AG04450 (cell line): ENCODE measurements at regions of chr1 and their contacts with region 1.

Region 1: DNA sequence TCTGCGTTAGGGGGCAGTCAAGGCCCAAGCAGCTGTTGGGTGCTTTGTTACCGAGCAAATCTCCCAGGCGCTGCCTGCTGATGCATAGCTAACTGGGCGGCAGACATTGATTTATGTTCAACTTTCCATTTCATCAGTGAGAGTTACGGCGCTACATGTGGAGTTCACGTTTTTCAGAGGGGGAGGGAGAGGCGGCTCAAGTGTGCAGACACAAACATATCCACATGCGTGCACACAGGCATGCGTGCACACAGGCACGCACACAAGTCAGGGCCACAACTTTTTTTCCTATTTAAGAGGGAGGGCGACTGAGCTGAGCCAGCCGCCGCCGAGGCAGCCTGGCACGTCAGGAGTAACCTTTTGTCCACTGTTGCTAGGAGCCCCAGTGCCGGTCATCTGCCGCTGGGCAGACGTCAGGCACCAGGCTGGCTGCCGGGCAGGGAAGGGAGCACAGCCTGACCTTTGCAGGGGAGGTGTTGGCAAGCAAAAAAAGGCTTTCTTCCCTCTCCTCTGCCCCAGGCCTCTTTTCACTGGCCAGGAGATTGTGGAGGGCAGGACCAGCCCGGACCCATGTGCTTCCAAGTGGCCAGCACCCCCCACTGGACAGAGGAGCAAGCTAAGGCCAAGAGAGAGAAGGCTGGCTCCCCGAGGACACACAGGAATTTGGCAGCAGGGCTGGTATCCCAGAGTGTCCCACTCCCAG is 73.3 kb downstream of the MRPL37 start:
- DNase-seq: peak; percentile 83
- H3K4me3 ChIP-seq: peak overlapping the region; percentile 27
- H3K27ac ChIP-seq: peak overlapping the region; percentile 83
- H3K27me3 ChIP-seq: no peaks in the 10 kb centered on the region
- CTCF ChIP-seq: peak; percentile 84

Region 2: DNA sequence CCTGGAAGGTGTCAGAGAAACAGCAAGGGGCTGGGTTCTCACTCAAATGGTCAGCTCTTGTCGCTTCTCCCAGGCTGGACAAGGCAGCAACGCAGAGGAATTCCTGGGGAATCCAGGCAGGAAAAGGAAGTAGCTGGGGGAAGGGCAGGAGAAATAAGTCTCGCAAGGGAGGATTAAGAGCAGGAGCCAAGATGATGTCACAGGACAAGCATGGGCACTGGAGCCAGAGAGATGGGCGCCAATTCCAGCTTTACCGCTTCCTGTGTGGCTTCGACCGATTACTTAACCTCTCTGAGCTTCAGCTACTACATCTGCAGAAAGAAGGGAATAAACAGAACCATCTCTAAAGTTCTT is 62.5 kb after region 1 on chr1:
- CTCF ChIA-PET with region 1: interaction called, 4 read pairs
- POLR2A ChIA-PET with region 1: interaction called, 13 read pairs
- DNase-seq: peak; percentile 80
- H3K4me3 ChIP-seq: peak overlapping the region; percentile 58
- H3K27ac ChIP-seq: peak overlapping the region; percentile 100
- H3K27me3 ChIP-seq: no peaks in the 10 kb centered on the region
- CTCF ChIP-seq: no peak

Region 3: DNA sequence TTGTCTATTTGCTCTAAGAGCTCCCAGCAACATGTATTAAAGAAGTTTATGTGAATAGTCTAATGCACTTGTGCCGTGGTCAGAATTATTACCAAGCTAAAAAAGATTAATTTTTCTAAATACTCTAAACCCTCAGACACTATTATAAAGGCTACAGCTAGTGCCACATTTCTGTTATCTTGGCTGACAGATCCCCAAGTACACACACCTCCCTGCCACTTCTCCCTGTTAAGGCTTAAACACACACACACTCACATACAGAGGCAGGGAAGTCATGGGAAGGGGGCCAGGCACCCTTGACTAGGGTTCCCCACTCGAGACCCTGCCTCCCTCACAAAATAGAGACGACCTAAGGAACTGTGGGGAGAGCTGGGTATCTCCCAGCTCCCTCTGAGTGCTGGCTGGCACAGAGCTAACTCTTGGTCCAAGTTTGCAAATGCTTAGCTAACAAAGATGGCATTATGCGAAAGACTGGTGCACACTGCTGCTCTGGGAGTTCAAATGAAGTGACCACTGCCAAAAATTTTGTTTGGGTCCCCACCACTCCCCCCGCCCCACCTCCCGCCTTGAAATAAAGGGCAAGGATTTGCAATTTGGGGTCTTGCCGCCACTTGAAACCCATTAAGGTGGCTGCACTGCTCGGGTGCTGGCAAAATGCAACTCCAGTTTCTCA is 123.2 kb after region 1 on chr1:
- CTCF ChIA-PET with region 1: no interaction called
- POLR2A ChIA-PET with region 1: interaction called, 10 read pairs
- DNase-seq: no peak
- H3K4me3 ChIP-seq: no peak overlapping the region
- H3K27ac ChIP-seq: no peak overlapping the region
- H3K27me3 ChIP-seq: no peaks in the 10 kb centered on the region
- CTCF ChIP-seq: no peak

Region 4: DNA sequence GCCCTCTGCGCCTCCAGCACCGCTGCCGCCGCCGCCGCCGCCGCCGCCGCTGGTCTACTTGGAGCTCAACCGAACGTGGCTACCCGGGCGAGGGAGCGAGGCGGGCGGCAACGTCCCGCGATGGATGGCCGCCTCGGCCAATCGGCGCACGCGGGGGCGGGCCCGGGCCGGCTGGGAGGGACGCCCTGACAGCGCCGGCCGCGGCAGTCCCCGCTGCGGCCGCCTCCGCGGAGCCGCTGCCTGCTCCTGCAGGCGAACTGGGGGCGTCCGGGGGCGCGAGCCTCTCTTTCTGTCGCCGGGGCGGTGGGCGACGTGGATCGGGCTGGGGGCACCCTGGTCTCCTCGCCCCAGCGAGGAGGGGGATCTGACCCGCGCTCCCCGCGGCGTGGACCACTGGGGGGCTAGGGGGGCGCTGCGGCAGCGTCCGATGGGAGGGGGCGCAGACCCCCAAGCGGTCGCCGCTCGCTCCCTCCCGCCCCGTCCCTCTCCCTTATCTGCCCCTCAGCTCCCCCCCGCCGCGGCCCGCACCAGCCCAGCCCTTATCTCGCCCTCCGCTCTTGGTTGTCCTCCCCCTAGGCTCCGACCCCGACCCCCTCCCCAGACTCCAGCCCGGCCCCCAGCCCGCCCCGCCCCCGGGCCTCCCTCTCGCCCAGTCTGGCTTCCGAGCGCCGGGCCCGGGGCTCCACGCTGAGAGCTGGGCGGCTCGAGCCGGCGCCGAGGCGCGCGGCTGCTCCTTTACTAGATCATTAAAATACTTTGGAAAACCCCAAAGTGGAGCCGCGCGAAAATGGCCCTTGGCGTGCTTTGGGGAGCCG is 133.3 kb after region 1 on chr1 and contains the start of gene SSBP3:
- CTCF ChIA-PET with region 1: interaction called, 15 read pairs
- POLR2A ChIA-PET with region 1: interaction called, 7 read pairs
- DNase-seq: peak; percentile 61
- H3K4me3 ChIP-seq: peak within 1 kb of the TSS; percentile 79
- H3K27ac ChIP-seq: peak within 1 kb of the TSS; percentile 57
- H3K27me3 ChIP-seq: no peaks in the 10 kb centered on the region
- CTCF ChIP-seq: no peak
- polyA plus RNA-seq, gene SSBP3: 33.8 and 34.3 TPM in 2 replicates

Region 5: GRCh38 chr1:54429179-54429520 is 155.9 kb after region 1 on chr1:
- CTCF ChIA-PET with region 1: no interaction called
- POLR2A ChIA-PET with region 1: no interaction called
- DNase-seq: no peak
- H3K4me3 ChIP-seq: no peak overlapping the region
- H3K27ac ChIP-seq: no peak overlapping the region
- H3K27me3 ChIP-seq: no peaks in the 10 kb centered on the region
- CTCF ChIP-seq: no peak

Region 6: GRCh38 chr1:54464482-54465146 is 191.4 kb after region 1 on chr1:
- CTCF ChIA-PET with region 1: no interaction called
- POLR2A ChIA-PET with region 1: no interaction called
- DNase-seq: no peak
- H3K4me3 ChIP-seq: no peak overlapping the region
- H3K27ac ChIP-seq: no peak overlapping the region
- H3K27me3 ChIP-seq: no peaks in the 10 kb centered on the region
- CTCF ChIP-seq: no peak